CD8-positive, alpha-beta T cell (primary cell): ENCODE measurements at regions of chr6 and their contacts with region 1.

Region 1: GRCh38 chr6:27146706-27147505 is 100.6 kb upstream of the PRSS16 start:
- DNase-seq: peak; percentile 56 to 98 (median 74)
- ATAC-seq: peak; percentile 85
- H3K4me3 ChIP-seq: peak overlapping the region; percentile 71 to 77
- H3K4me3 Mint-ChIP-seq: no peak overlapping the region
- H3K27ac ChIP-seq: peak overlapping the region; percentile 84 to 91
- H3K27ac Mint-ChIP-seq: no peak overlapping the region
- H3K4me1 ChIP-seq: peaks cover 11% of the 10 kb centered on the region
- H3K4me1 Mint-ChIP-seq: peaks cover 13% of the 10 kb centered on the region
- H3K27me3 ChIP-seq: no peaks in the 10 kb centered on the region
- H3K27me3 Mint-ChIP-seq: no peaks in the 10 kb centered on the region
- CTCF ChIP-seq: no peak

Region 2: GRCh38 chr6:26183581-26184366 is 963.1 kb before region 1 on chr6:
- CTCF ChIA-PET with region 1: no interaction called
- POLR2A ChIA-PET with region 1: interaction called, 11 read pairs
- intact Hi-C with region 1: no loop called
- DNase-seq: peak in 7 of 9 experiments; percentile 33 to 90 (median 59)
- ATAC-seq: peak; percentile 88
- H3K4me3 ChIP-seq: peak overlapping the region; percentile 60 to 71
- H3K4me3 Mint-ChIP-seq: peak overlapping the region; percentile 100
- H3K27ac ChIP-seq: peak overlapping the region; percentile 61 to 76
- H3K27ac Mint-ChIP-seq: peak overlapping the region; percentile 99
- H3K4me1 ChIP-seq: peaks cover 20% of the 10 kb centered on the region
- H3K4me1 Mint-ChIP-seq: peaks cover 42% of the 10 kb centered on the region
- H3K27me3 ChIP-seq: no peaks in the 10 kb centered on the region
- H3K27me3 Mint-ChIP-seq: no peaks in the 10 kb centered on the region
- CTCF ChIP-seq: no peak

Region 3: DNA sequence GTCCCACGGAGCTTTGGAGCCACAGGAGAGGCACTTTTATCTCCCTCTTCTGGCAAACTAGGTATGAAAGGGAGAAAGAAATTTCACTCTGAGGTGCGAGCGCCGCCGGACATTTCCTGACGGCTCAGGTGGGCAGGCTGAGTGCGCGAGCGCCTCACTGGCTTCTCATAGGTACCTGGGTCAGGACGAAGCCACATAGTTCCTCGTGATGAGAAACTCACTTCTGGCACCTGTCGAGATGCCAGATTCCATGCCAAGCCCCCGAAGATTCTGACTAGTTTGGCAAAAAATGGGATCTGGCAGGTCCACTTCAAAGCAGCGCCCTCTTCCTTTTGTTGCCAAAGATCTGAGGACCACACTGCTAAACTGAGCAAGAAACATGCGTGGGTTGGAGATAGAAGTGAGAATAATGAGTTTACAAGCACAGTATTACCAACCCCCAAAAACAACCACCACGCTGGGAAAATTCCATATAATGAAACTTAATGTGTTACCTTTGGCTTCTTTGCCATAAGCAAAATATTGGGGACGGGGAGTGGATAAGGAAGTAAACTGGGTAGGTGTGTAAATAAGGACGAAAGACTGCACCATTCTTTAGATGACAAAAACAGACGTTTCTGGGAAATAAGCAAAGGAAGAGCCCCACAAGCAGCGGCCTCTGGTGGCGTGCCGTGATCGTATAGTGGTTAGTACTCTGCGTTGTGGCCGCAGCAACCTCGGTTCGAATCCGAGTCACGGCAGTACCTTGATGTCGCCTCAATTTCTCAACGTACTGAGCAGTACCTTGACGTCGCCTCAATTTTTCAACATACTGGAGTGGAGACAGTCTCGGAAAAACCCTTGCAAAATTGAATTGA is 10.8 kb after region 1 on chr6:
- CTCF ChIA-PET with region 1: interaction called, 22 read pairs
- POLR2A ChIA-PET with region 1: interaction called, 44 read pairs
- intact Hi-C with region 1: loop called (anchors 1 kb)
- DNase-seq: peak; percentile 72 to 91 (median 86)
- ATAC-seq: peak; percentile 75
- H3K4me3 ChIP-seq: peak overlapping the region; percentile 55 to 60
- H3K4me3 Mint-ChIP-seq: peak overlapping the region; percentile 85
- H3K27ac ChIP-seq: peak overlapping the region; percentile 18 to 23
- H3K27ac Mint-ChIP-seq: peak overlapping the region; percentile 87
- H3K4me1 ChIP-seq: peaks cover 13% of the 10 kb centered on the region
- H3K4me1 Mint-ChIP-seq: peaks cover 38% of the 10 kb centered on the region
- H3K27me3 ChIP-seq: no peaks in the 10 kb centered on the region
- H3K27me3 Mint-ChIP-seq: no peaks in the 10 kb centered on the region
- CTCF ChIP-seq: peak; percentile 48

Region 4: GRCh38 chr6:27472617-27473400 is 325.9 kb after region 1 on chr6 and contains the start of gene ZNF184:
- CTCF ChIA-PET with region 1: no interaction called
- POLR2A ChIA-PET with region 1: interaction called, 4 read pairs
- intact Hi-C with region 1: loop called in 1 of 2 experiments (anchors 1 kb)
- DNase-seq: peak; percentile 71 to 94 (median 84)
- ATAC-seq: peak; percentile 63
- H3K4me3 ChIP-seq: peak within 1 kb of the TSS; percentile 80 to 90
- H3K4me3 Mint-ChIP-seq: peak within 1 kb of the TSS; percentile 96
- H3K27ac ChIP-seq: peak within 1 kb of the TSS; percentile 94 to 96
- H3K27ac Mint-ChIP-seq: peak within 1 kb of the TSS; percentile 96
- H3K4me1 ChIP-seq: peaks cover 26% of the 10 kb centered on the region
- H3K4me1 Mint-ChIP-seq: peaks cover 48% of the 10 kb centered on the region
- H3K27me3 ChIP-seq: no peaks in the 10 kb centered on the region
- H3K27me3 Mint-ChIP-seq: no peaks in the 10 kb centered on the region
- CTCF ChIP-seq: no peak
- total RNA-seq, gene ZNF184: 31.8 to 32.9 TPM

Region 5: GRCh38 chr6:27809939-27810767 is 663.2 kb after region 1 on chr6:
- CTCF ChIA-PET with region 1: no interaction called
- POLR2A ChIA-PET with region 1: interaction called, 93 read pairs
- intact Hi-C with region 1: no loop called
- DNase-seq: peak; percentile 63 to 96 (median 74)
- ATAC-seq: peak; percentile 60
- H3K4me3 ChIP-seq: peak overlapping the region; percentile 52 to 65
- H3K4me3 Mint-ChIP-seq: peak overlapping the region; percentile 95
- H3K27ac ChIP-seq: peak overlapping the region; percentile 83 to 87
- H3K27ac Mint-ChIP-seq: peak overlapping the region; percentile 99
- H3K4me1 ChIP-seq: peaks cover 36% of the 10 kb centered on the region
- H3K4me1 Mint-ChIP-seq: peaks cover 57% of the 10 kb centered on the region
- H3K27me3 ChIP-seq: no peaks in the 10 kb centered on the region
- H3K27me3 Mint-ChIP-seq: no peaks in the 10 kb centered on the region
- CTCF ChIP-seq: no peak

Region 6: DNA sequence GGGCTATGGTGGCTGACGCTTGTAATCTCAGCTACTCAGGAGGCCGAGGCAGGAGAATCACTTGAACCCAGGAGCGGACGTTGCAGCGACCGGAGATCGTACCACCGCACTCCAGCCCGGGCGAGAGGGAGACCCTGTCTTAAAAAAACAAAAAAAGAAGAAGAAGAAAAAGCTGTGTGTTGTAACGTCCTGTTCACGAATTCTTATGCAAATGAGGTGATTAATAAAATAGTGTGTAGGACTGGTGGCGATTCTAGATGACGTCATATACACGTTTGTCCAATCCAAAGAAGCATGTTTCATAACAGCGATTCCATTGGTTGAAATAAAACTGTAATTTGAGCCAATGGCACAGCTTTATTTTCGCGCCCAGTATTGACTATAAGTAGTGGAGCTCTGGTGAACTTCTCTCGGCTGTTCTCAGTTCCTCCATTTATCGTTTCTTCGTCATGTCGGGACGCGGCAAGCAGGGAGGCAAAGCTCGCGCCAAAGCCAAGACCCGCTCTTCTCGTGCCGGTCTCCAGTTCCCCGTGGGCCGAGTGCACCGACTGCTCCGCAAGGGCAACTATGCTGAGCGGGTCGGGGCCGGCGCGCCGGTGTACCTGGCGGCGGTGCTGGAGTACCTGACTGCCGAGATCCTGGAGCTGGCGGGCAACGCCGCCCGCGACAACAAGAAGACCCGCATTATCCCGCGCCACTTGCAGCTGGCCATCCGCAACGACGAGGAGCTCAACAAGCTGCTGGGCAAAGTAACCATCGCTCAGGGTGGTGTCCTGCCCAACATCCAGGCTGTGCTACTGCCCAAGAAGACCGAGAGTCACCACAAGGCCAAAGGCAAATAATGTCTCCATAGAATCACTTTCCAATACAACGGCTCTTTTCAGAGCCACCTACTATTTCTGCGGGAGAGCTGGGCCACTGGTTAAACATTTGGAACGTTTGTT is 718.3 kb after region 1 on chr6:
- CTCF ChIA-PET with region 1: no interaction called
- POLR2A ChIA-PET with region 1: interaction called, 17 read pairs
- intact Hi-C with region 1: no loop called
- DNase-seq: peak; percentile 37 to 97 (median 56)
- ATAC-seq: peak; percentile 83
- H3K4me3 ChIP-seq: peak overlapping the region; percentile 71 to 79
- H3K4me3 Mint-ChIP-seq: peak overlapping the region; percentile 95
- H3K27ac ChIP-seq: peak overlapping the region; percentile 67 to 83
- H3K27ac Mint-ChIP-seq: peak overlapping the region; percentile 94
- H3K4me1 ChIP-seq: peaks cover 17% of the 10 kb centered on the region
- H3K4me1 Mint-ChIP-seq: peaks cover 38% of the 10 kb centered on the region
- H3K27me3 ChIP-seq: no peaks in the 10 kb centered on the region
- H3K27me3 Mint-ChIP-seq: no peaks in the 10 kb centered on the region
- CTCF ChIP-seq: no peak

Region 7: GRCh38 chr6:28940858-28941680 is 1794.2 kb after region 1 on chr6:
- CTCF ChIA-PET with region 1: no interaction called
- POLR2A ChIA-PET with region 1: no interaction called
- intact Hi-C with region 1: loop called in 1 of 2 experiments (anchors 5 kb)
- DNase-seq: peak in 8 of 9 experiments; percentile 58 to 92 (median 70)
- ATAC-seq: peak; percentile 70
- H3K4me3 ChIP-seq: peak overlapping the region; percentile 66 to 81
- H3K4me3 Mint-ChIP-seq: peak overlapping the region; percentile 91
- H3K27ac ChIP-seq: peak overlapping the region; percentile 70 to 79
- H3K27ac Mint-ChIP-seq: peak overlapping the region; percentile 96
- H3K4me1 ChIP-seq: peaks cover 40% of the 10 kb centered on the region
- H3K4me1 Mint-ChIP-seq: peaks cover 46% of the 10 kb centered on the region
- H3K27me3 ChIP-seq: no peaks in the 10 kb centered on the region
- H3K27me3 Mint-ChIP-seq: no peaks in the 10 kb centered on the region
- CTCF ChIP-seq: no peak